Mammary epithelial cell (primary cell): ENCODE measurements at regions of chr1 and their contacts with region 1.

Region 1: DNA sequence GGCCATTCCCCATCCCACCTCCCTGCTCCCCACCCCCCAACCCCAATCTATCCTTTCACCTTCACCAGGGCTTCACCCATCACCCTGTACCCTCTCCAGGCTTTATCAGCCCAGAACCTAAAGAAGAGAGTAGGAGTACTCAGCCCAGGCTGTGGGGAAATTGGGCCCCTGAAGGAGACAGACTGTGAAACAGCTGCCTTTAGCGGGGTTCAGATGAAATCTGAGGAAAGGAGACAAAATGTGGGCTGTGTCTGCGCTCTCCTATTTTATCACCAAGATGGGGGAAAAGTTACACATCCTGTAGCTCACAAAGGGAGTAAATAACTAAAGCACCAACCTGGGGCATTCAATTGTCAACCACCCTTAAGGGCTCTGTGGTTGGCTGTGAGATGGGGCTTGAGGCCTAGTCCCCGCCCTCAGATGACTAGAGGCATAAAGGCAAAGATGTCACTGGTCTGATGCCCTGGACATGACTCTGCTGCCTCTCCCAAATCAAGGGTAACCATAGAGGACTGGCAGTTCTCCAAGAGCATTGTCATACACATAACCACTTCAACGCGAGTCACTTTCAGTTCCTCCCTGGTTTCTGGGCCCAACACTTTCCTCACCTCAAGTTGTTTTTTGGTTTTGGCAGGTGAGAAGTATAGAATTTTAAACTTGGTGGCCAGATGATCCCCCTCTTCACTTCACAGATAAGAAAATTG is 30.0 kb downstream of the SLC27A3 start:
- DNase-seq: peak; percentile 93
- H3K4me3 ChIP-seq: no peak overlapping the region
- H3K27ac ChIP-seq: peak overlapping the region; percentile 82
- H3K4me1 ChIP-seq: peaks cover 12% of the 10 kb centered on the region
- H3K27me3 ChIP-seq: no peaks in the 10 kb centered on the region
- CTCF ChIP-seq: no peak

Region 2: DNA sequence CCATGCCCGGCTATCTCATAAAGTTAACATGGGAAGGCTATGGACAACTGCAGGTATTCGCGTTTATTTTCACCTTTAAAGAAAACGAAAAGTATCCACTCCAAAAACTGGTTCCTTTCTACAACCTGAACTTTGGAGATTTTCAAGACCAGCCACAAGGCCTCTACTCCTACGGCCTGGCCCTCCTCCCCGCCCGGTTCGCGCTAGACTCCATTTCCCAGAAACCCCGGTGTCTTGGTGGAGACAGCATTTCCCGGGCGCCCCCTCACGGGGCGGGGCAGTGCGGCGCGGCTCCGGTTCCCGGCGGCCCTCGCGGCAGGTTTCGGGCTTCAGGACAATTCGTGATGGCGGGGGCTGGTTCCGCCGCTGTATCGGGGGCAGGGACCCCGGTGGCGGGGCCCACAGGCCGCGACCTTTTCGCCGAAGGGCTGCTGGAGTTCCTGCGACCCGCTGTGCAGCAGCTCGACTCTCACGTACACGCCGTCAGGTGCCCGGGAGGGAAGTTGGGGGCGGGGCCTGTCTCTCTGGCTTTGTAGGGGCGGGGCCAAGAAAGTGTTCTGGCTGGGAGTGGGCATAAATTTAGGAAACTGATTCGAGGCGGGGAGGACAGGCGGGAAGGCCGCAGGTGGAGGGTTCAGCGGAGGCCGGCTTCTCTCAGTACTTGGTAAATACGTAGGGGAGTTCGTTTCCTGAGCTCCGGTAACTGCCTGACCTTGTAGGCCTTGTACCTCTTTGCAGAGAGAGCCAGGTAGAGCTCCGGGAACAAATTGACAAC is 146.6 kb before region 1 on chr1 and contains the start of gene SNAPIN:
- CTCF ChIA-PET with region 1: no interaction called
- dilution Hi-C with region 1: no loop called
- in situ Hi-C with region 1: no loop called
- intact Hi-C with region 1: no loop called
- DNase-seq: peak; percentile 83
- H3K4me3 ChIP-seq: peak within 1 kb of the TSS; percentile 70 to 93 (median 75)
- H3K27ac ChIP-seq: peak within 1 kb of the TSS; percentile 82
- H3K4me1 ChIP-seq: peaks cover 13% of the 10 kb centered on the region
- H3K27me3 ChIP-seq: no peaks in the 10 kb centered on the region
- CTCF ChIP-seq: peak in 1 of 2 donors; percentile 29
- total RNA-seq, gene SNAPIN: 33.1 to 39.8 TPM

Region 3: GRCh38 chr1:153849487-153850185 is 44.4 kb after region 1 on chr1:
- CTCF ChIA-PET with region 1: no interaction called
- dilution Hi-C with region 1: loop called (anchors 5 kb)
- in situ Hi-C with region 1: no loop called
- intact Hi-C with region 1: no loop called
- DNase-seq: no peak
- H3K4me3 ChIP-seq: no peak overlapping the region
- H3K27ac ChIP-seq: no peak overlapping the region
- H3K4me1 ChIP-seq: no peaks in the 10 kb centered on the region
- H3K27me3 ChIP-seq: no peaks in the 10 kb centered on the region
- CTCF ChIP-seq: no peak